ENCODE measurements at regions of chr14 and their contacts with region 1.

Region 1: DNA sequence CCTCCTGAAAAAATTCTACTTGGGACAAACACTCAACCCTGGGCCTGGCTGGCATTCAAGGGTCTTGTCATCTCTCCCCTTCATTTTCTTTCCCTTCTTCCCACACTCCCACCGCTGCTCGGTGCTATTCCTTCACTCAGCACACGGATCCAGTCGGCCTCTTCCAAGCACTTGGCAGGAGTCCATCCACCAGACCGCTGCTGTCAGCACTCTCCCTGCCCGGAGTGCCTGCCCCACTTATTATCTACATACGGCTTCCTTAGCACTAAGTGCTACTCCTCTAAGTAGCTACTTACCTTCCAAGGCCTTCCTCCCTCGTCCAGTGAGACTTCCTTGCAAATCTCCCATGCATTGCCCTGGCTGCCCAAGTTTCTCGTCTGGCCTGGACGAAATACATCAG is 29.8 kb downstream of the CALM1 start:
- DNase-seq: peak; percentile 47
- H3K4me3 ChIP-seq: no peak overlapping the region
- H3K27ac ChIP-seq: no peak overlapping the region
- H3K4me1 ChIP-seq: peaks cover 0 to 10% (median 2%) of the 10 kb centered on the region in 4 donors
- H3K27me3 ChIP-seq: no peaks in the 10 kb centered on the region
- CTCF ChIP-seq: no peak
- EP300 ChIP-seq: no peak
- POLR2A ChIP-seq: no peak

Region 2: GRCh38 chr14:90500651-90501370 is 74.1 kb after region 1 on chr14:
- in situ Hi-C with region 1: no loop called
- intact Hi-C with region 1: loop called (anchors 10 kb)
- DNase-seq: no peak
- H3K4me3 ChIP-seq: no peak overlapping the region
- H3K27ac ChIP-seq: no peak overlapping the region
- H3K4me1 ChIP-seq: peaks cover 0 to 4% (median 0%) of the 10 kb centered on the region in 4 donors
- H3K27me3 ChIP-seq: no peaks in the 10 kb centered on the region
- CTCF ChIP-seq: no peak
- EP300 ChIP-seq: no peak
- POLR2A ChIP-seq: no peak

Region 3: DNA sequence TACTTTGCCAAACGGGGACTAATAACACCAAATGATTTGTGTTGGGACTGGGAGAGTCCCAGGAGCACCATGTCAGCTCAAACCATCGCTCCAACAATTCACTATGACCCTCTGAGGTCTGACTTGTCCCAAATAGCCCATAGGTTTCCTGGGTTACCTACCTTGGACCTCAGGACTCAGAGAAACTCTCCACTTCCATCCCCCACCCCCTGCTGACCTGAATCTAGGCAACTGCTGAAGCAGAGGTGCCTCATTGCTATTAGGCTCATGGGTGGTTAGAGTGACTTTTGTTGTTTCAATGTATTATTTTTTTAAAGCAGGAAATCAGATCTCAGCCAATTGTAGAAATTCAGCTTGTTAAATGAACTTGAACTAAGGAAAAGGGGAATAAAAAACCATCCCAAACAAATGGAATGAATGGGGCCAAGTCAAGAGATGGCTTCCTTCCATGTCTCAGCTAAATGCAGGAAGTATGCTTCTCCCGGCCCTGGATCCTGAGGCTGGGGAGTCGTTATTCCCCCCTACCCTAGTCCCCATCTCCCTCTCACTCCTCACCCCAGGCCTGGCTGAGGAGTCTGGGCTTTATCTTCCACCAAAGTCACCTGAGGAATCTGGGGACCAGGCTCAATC is 1815.4 kb after region 1 on chr14:
- in situ Hi-C with region 1: no loop called
- intact Hi-C with region 1: loop called (anchors 5 kb)
- DNase-seq: no peak
- H3K4me3 ChIP-seq: no peak overlapping the region
- H3K27ac ChIP-seq: no peak overlapping the region
- H3K4me1 ChIP-seq: no peaks in the 10 kb centered on the region
- H3K27me3 ChIP-seq: no peaks in the 10 kb centered on the region
- CTCF ChIP-seq: no peak
- EP300 ChIP-seq: no peak
- POLR2A ChIP-seq: no peak

Measured in transverse colon (tissue), 4 donors.